ENCODE measurements at regions of chr7 and their contacts with region 1.

Region 1: DNA sequence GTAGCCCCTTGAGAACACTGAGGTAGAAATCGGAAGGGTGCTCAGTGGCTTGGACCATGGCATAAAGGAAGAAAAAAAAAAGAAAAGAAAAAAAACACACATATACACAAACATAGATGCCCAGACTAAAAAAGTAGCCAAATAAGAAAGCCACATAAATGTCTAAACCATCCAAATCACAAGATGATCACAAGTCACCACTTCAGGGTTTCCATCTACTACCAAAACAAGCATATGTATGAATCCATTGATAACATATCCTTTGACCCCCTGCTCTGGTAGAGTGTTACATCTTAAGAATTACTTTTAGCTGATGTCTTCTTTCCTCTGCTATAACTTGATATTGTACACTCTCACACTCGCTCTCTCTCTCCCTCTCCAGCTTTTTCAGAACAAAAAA is 245.9 kb downstream of the AHR start:
- DNase-seq: no peak
- ATAC-seq: no peak
- H3K4me3 ChIP-seq: no peak overlapping the region
- H3K27ac ChIP-seq: no peak overlapping the region
- H3K4me1 ChIP-seq: peaks cover 0 to 2% of the 10 kb centered on the region in 2 donors
- H3K27me3 ChIP-seq: no peaks in the 10 kb centered on the region

Region 2: GRCh38 chr7:17506095-17506494 is 38.3 kb before region 1 on chr7:
- intact Hi-C with region 1: loop called in 1 of 2 experiments (anchors 5 kb)
- DNase-seq: no peak
- ATAC-seq: no peak
- H3K4me3 ChIP-seq: no peak overlapping the region
- H3K27ac ChIP-seq: no peak overlapping the region
- H3K4me1 ChIP-seq: peaks cover 0 to 2% of the 10 kb centered on the region in 2 donors
- H3K27me3 ChIP-seq: no peaks in the 10 kb centered on the region

Measured in aorta (tissue), 5 donors.